GM13976 (cell line): ENCODE measurements at regions of chr9 and their contacts with region 1.

Region 1: DNA sequence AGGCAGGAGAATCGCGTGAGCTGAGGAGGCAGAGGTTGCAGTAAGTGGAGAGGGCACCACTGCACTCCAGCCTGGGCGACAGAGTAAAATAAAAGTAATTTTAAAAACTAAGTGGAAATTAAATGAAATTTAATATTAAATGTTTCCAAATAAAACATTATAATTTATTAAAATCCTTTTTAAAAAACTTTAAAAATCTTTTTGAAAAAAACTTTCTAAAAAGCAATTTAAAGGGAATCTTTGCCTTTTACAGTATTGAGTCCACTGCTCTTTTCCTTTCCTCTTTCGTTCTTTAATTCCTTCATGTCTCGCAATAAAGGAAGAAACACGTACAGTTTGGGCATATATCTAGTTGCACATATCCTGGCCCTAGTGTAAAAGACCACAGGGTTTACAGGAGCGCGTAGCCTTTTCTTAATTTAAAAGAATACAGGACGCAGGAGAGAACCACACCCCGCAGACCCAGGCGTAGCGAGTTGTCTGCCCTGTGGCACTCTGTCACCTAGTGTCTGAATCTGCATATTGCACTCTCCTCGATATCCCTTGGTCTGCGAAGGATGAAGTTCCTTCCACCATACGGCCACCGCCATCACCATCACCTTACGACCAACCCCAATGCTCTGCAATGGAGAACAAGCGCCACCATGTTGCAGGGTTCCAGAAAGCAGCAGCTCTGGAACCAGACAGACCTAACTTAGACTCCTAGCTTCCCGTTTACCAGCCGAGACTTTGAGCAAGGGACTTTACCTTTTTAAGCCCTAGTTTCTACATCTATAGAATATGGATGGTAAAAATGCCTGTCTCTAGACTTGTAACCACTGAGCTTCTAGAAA is 77.6 kb upstream of the DMRT1 start:
- DNase-seq: peak; percentile 61
- CTCF ChIP-seq: peak; percentile 31

Region 2: GRCh38 chr9:613771-614347 is 150.0 kb before region 1 on chr9:
- in situ Hi-C with region 1: loop called (anchors 5 kb)
- DNase-seq: peak; percentile 74
- CTCF ChIP-seq: peak; percentile 79

Region 3: GRCh38 chr9:706606-707459 is 57.1 kb before region 1 on chr9:
- in situ Hi-C with region 1: loop called (anchors 10 kb)
- DNase-seq: peak; percentile 41
- CTCF ChIP-seq: no peak